ENCODE measurements at regions of chr3 and their contacts with region 1.

Region 1: DNA sequence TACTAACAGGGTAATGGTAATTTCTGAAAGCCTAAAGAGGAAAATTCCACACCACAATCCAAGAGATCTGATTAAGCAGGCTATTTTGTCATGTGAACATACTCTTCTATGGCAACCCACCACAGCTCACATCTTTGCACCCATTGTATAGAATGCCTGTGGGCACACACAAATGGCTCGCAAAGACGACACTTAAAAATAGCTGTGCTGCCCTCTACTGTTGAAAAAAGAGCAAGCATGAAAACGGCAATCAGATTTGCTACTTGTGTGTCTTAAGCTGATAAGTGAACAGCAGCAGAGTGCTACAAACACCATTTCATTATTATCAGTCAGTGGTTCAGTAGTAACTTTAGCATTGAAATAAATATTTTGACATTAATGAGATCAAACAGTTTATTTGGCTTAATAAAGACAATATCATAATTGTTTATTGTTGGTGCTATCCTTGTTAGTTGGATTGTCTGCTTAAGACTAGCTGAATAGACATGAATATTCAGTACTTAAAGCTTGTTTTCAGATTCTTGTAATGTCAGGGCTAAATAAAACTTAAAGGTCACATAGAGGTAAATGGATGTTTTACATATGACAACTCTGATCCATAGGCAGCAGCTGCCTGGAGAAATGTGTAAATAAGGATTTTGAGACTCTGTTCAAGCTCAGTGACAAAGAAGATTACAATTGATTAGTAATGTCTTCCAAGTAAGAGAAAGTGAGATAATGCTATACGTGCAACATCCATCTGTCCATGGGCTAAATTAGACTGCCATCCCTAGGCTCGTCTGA is 199.1 kb downstream of the LRRN1 start:
- DNase-seq: peak; percentile 24
- CTCF ChIP-seq: peak; percentile 67

Region 2: DNA sequence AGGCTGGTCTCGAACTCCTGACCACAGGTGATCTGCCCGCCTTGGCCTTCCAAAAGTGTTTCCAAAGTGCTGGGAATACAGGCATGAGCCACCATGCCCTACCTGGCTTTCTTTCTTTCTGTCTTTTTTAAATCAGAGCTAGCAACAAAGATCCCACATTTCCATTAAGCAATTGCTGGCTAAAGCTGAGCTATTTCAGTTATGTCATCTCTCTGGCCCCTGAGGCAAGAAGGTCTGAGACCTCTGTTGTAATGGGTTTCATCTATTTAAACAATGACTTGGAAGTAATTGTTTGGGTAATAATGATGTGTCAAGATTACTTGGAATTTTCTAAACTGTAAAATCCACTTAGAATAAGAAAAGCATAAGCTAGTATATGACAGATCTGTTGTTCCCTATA is 788.6 kb before region 1 on chr3:
- CTCF ChIA-PET with region 1: interaction called, 17 read pairs
- POLR2A ChIA-PET with region 1: no interaction called
- DNase-seq: no peak
- CTCF ChIP-seq: no peak

Region 3: DNA sequence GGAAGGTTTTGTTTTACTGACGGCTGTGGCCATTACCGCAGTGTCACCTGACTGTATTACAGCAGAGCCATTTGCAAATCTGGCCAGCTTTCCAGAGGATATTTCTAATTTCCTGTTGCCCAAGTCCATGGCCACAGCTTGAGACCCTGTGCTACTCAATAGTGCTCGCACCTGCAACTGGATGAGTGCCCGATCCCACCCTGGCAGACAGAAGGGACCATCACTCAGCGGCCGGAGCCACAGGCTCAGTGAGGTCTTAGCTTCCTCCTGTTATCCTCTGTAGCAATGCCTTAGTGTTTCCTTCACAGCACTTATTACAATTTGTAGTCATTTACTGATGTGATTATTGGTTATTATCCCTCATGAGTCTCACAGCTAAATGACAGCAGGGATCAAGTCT is 14.3 kb before region 1 on chr3:
- CTCF ChIA-PET with region 1: interaction called, 18 read pairs
- POLR2A ChIA-PET with region 1: no interaction called
- DNase-seq: no peak
- CTCF ChIP-seq: no peak

Region 4: GRCh38 chr3:4011166-4011565 is 12.8 kb after region 1 on chr3:
- CTCF ChIA-PET with region 1: interaction called, 35 read pairs
- POLR2A ChIA-PET with region 1: no interaction called
- DNase-seq: no peak
- CTCF ChIP-seq: no peak